ENCODE measurements at regions of chr10 and their contacts with region 1.

Region 1: GRCh38 chr10:101297901-101298486 is 56.0 kb upstream of the BTRC start:
- DNase-seq: peak; percentile 71
- ATAC-seq: peak; percentile 65

Region 2: GRCh38 chr10:101346177-101346576 is 48.2 kb after region 1 on chr10:
- intact Hi-C with region 1: no loop called
- DNase-seq: no peak
- ATAC-seq: no peak

Region 3: GRCh38 chr10:101441541-101442455 is 143.8 kb after region 1 on chr10:
- intact Hi-C with region 1: loop called (anchors 10 kb)
- DNase-seq: no peak
- ATAC-seq: peak; percentile 86

Region 4: DNA sequence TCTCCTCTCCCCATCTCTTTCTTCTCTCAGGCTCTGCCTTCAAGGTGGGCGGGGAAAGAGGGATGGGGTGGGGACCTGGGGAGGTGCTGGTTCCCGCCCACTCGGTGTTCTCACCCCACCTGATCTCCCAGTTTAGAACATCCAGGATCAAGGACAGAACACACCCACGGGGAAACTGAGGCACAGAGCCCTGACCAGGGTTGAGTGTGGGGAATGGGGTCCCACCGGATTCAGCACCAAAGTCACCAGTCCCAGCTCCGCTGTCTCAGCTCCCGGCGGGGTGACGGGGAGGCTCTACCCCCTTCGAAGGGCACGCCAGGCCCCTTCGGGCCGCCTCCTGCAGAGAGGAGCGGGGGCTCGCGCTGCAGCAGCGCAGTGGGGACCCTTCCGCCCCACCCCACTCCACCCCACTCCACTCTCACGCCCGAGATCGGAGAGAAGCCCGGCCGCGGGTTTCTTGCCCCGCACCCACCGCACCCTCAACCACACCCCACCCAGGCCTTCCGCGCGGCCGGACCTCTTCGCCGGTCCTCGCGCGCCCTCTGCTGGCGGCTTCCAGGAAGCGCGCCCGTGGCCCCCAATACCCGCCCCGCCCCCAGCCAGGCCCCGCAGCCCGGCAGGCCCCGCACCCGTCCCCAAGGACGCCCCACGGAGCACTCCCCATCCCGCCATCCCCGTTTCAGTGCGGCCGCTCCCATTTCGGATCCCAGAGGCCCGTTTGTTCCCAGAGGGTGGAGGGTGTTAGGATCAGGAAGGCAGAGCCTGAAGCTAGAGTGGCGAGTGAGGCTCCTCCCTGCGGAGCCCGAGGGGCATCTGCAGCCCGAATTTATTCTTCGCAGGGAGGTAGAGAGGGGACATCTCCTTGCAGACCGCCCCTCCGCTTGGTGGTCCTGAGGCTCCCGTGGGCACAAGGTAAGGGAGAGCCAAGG is 272.1 kb after region 1 on chr10:
- intact Hi-C with region 1: no loop called
- DNase-seq: peak; percentile 89
- ATAC-seq: peak; percentile 97

Measured in Right ventricle myocardium superior (tissue), 1 donor.